ENCODE measurements at regions of chr5 and their contacts with region 1.

Region 1: GRCh38 chr5:80407735-80408482 is at the start of gene ZFYVE16:
- DNase-seq: peak; percentile 99
- H3K4me3 Mint-ChIP-seq: peak within 1 kb of the TSS; percentile 97
- H3K27ac Mint-ChIP-seq: peak within 1 kb of the TSS; percentile 99
- H3K4me1 Mint-ChIP-seq: peaks cover 15% of the 10 kb centered on the region
- H3K27me3 Mint-ChIP-seq: peaks cover 7% of the 10 kb centered on the region
- total RNA-seq, gene ZFYVE16: 8.1 and 9.4 TPM in 2 replicates

Region 2: GRCh38 chr5:79514391-79515105 is 893.4 kb before region 1 on chr5:
- intact Hi-C with region 1: loop called (anchors 2 kb)
- DNase-seq: peak; percentile 97
- H3K4me3 Mint-ChIP-seq: peak overlapping the region; percentile 88
- H3K27ac Mint-ChIP-seq: peak overlapping the region; percentile 97
- H3K4me1 Mint-ChIP-seq: peaks cover 32% of the 10 kb centered on the region
- H3K27me3 Mint-ChIP-seq: peaks cover 23% of the 10 kb centered on the region

Region 3: GRCh38 chr5:80141147-80141671 is 266.7 kb before region 1 on chr5:
- intact Hi-C with region 1: loop called (anchors 10 kb)
- DNase-seq: no peak
- H3K4me3 Mint-ChIP-seq: no peak overlapping the region
- H3K27ac Mint-ChIP-seq: peak overlapping the region; percentile 84
- H3K4me1 Mint-ChIP-seq: peaks cover 51% of the 10 kb centered on the region
- H3K27me3 Mint-ChIP-seq: no peaks in the 10 kb centered on the region

Region 4: GRCh38 chr5:80255732-80256479 is 152.0 kb before region 1 on chr5 and contains the start of gene SERINC5:
- intact Hi-C with region 1: loop called (anchors 5 kb)
- DNase-seq: peak; percentile 95
- H3K4me3 Mint-ChIP-seq: peak within 1 kb of the TSS; percentile 97
- H3K27ac Mint-ChIP-seq: peak within 1 kb of the TSS; percentile 99
- H3K4me1 Mint-ChIP-seq: peaks cover 44% of the 10 kb centered on the region
- H3K27me3 Mint-ChIP-seq: no peaks in the 10 kb centered on the region
- total RNA-seq, gene SERINC5: 19.2 and 21.3 TPM in 2 replicates

Region 5: DNA sequence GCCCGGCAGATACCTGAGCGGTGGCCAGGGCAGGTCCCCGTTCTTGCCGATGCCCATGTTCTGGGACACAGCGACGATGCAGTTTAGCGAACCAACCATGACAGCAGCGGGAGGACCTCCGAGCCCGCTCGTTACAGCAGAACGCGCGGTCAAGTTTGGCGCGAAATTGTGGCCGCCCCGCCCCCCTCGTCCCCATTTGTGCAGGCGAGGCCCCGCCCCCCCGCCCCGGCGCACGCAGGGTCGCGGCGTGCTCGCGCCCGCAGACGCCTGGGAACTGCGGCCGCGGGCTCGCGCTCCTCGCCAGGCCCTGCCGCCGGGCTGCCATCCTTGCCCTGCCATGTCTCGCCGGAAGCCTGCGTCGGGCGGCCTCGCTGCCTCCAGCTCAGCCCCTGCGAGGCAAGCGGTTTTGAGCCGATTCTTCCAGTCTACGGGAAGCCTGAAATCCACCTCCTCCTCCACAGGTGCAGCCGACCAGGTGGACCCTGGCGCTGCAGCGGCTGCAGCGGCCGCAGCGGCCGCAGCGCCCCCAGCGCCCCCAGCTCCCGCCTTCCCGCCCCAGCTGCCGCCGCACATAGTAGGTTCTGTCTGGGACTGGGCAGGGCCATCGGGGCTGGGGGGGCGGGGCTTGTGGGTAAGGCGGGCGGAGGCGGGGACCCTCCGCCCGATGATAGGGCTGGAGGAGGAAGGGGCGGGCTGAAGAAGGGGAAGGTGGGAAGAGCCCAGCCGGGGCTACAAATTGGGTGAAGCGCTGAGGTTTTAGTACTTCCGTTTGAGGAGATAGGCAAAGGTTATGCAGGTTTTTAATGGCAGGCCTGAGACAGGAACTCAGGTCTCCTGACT is 246.7 kb after region 1 on chr5 and contains the starts of genes DHFR and MSH3:
- intact Hi-C with region 1: loop called (anchors 2 kb)
- DNase-seq: peak; percentile 96
- H3K4me3 Mint-ChIP-seq: peak within 1 kb of the TSS; percentile 84
- H3K27ac Mint-ChIP-seq: peak within 1 kb of the TSS; percentile 93
- H3K4me1 Mint-ChIP-seq: peaks cover 23% of the 10 kb centered on the region
- H3K27me3 Mint-ChIP-seq: no peaks in the 10 kb centered on the region
- total RNA-seq, gene DHFR: 66.5 and 73.4 TPM in 2 replicates
- total RNA-seq, gene MSH3: 21.0 and 21.1 TPM in 2 replicates

Measured in activated CD4-positive, alpha-beta T cell treated with anti-CD3 and anti-CD28 coated beads, Interleukin-2, amount 10 ng/mL, durations not matched to agents 24 days and 14 days (primary cell).